Activated T-helper 1 cell treated with anti-CD3 and anti-CD28 coated beads, Interleukin-12 subunit alpha, Interleukin-12 subunit beta, Interleukin-2, Interleukin-4 antibody, amounts not matched to agents 30 ng/mL and 10 ng/mL and 1 ng/mL, durations not matched to agents 14 hours and 24 hours and 36 hours (primary cell): ENCODE measurements at regions of chr5 and their contacts with region 1.

Region 1: GRCh38 chr5:139844472-139845145 is 49.0 kb downstream of the PSD2 start:
- DNase-seq: peak; percentile 20
- H3K4me3 Mint-ChIP-seq: no peak overlapping the region
- H3K27ac Mint-ChIP-seq: no peak overlapping the region
- H3K4me1 Mint-ChIP-seq: peaks cover 8% of the 10 kb centered on the region
- H3K27me3 Mint-ChIP-seq: peaks cover 44% of the 10 kb centered on the region

Region 2: GRCh38 chr5:139968547-139969261 is 124.1 kb after region 1 on chr5:
- intact Hi-C with region 1: loop called (anchors 1 kb)
- DNase-seq: peak; percentile 77
- H3K4me3 Mint-ChIP-seq: no peak overlapping the region
- H3K27ac Mint-ChIP-seq: no peak overlapping the region
- H3K4me1 Mint-ChIP-seq: no peaks in the 10 kb centered on the region
- H3K27me3 Mint-ChIP-seq: peaks cover 29% of the 10 kb centered on the region